ENCODE measurements at regions of chr3 and their contacts with region 1.

Region 1: GRCh38 chr3:15120986-15121385 is 22.0 kb upstream of the RBSN start:
- DNase-seq: no peak
- H3K4me3 ChIP-seq: no peak overlapping the region
- H3K27ac ChIP-seq: no peak overlapping the region
- H3K4me1 ChIP-seq: no peaks in the 10 kb centered on the region; a peak in 1 of 7 replicates
- H3K27me3 ChIP-seq: peaks cover 0 to 3% (median 0%) of the 10 kb centered on the region in 4 experiments; a peak in 2 of 7 replicates
- CTCF ChIP-seq: no peak
- EP300 ChIP-seq: no peak
- POLR2A ChIP-seq: no peak
- RAD21 ChIP-seq: no peak

Region 2: DNA sequence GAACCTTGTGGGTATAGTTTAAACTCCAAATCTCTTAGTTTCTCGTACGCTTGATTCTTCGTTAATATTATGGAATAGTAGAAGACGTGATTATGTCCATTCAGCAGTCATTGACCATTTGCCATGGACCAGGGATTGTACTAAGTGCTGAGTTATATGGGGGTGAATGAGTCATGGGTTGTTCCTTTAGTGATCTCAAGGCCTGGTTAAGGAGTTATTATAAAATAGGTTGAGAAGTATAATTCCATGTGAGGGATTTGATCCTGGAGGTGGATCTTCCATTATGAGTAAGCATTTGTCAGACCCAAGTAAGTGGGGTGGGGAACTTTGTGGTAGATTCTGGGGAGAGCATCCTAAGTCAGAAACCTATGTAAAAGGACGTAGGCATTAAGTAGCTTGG is 158.2 kb before region 1 on chr3:
- CTCF ChIA-PET with region 1: no interaction called
- POLR2A ChIA-PET with region 1: no interaction called
- DNase-seq: no peak
- H3K4me3 ChIP-seq: no peak overlapping the region
- H3K27ac ChIP-seq: no peak overlapping the region
- H3K4me1 ChIP-seq: no peaks in the 10 kb centered on the region
- H3K27me3 ChIP-seq: no peaks in the 10 kb centered on the region
- CTCF ChIP-seq: no peak
- EP300 ChIP-seq: no peak
- POLR2A ChIP-seq: no peak
- RAD21 ChIP-seq: no peak

Region 3: DNA sequence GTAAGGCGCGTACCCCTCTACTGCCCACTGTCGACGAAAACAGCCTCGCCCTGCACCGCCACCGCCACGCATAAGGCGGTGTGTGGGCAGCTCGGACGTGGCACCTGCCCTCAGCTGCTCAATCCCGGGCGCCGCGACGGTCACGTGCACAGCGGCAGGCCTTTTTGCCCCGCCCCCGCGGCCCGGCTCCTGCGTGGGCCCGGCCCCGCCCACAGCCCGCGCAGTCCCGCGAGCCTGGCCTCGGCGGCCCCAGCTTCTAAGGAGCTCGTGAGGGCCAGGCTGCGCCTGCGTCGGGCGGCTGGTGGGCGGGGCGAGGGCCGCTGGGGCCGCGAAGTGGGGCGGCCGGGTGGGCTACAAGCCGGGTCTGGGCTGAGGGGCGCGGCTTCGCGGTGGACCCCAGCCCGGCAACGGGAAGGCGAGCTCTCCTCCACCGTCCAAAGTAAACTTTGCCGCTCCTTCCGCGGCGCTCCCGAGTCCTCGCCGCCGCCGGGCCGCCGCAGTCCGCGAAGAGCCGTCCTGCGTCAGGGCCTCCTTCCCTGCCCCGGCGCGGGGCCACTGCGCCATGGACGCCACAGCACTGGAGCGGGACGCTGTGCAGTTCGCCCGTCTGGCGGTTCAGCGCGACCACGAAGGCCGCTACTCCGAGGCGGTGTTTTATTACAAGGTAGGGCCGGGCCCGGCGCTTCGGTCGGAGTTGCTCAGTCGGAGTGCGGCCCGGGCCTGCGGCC is 85.1 kb after region 1 on chr3 and contains the start of gene CAPN7:
- CTCF ChIA-PET with region 1: interaction called, 86 read pairs
- POLR2A ChIA-PET with region 1: no interaction called
- DNase-seq: peak; percentile 23 to 86
- H3K4me3 ChIP-seq: peak within 1 kb of the TSS; percentile 83 to 92 (median 86)
- H3K27ac ChIP-seq: peak within 1 kb of the TSS; percentile 73; the same call in 1 of the 2 replicates
- H3K4me1 ChIP-seq: peaks cover 0 to 3% (median 1%) of the 10 kb centered on the region in 4 experiments; a peak in 3 of 7 replicates
- H3K27me3 ChIP-seq: no peaks in the 10 kb centered on the region; a peak in 2 of 7 replicates
- CTCF ChIP-seq: peak; percentile 31 to 69 (median 57)
- EP300 ChIP-seq: no peak
- POLR2A ChIP-seq: peak in 1 of 2 experiments; percentile 67; a peak in 2 of 3 replicates
- RAD21 ChIP-seq: peak; percentile 14 to 30; a peak in 1 of 4 replicates
- total RNA-seq, gene CAPN7: 13.0 and 13.2 TPM in 2 replicates

Measured in H1 (cell line).